ENCODE measurements at regions of chr2 and their contacts with region 1.

Region 1: DNA sequence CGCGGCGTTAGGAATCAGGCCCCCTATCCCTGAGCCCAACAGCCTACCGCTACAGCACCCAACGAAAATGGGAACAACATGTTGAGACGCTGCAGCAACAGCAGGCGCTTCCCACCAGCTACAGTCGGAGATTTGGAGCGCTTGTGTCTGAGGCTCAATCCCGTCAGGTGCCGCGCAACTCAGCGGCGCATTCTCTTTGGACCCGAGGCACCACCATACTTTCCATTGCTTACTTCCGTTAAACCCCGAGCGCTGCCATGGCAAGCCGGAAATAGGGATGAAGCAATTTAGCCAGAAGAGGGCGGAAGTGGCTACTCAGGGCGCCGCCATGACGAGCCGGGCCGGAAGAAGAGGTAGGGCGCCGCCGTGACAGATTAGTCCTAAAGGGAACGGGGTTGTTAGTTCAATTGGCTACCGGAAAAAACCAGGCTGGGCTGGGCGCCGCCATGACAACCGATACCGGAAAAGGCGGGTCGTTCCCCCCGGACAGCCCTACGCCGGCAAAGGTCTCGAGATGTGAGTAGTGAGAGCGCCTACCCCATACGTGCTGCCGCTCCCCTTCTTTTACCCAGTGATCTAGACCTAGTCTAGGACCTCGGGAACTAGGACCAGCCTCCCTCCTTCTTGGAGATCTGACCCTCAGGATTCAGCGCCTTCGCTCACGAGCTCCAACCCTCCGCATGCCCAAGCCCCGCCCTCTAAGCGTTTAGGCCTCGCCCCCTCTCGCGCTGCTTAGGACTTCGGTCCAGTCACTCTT is at the start of gene CHCHD5:
- DNase-seq: peak; percentile 85 to 97 (median 92)
- ATAC-seq: peak; percentile 84
- H3K4me3 ChIP-seq: peak within 1 kb of the TSS; percentile 79 to 96
- H3K4me3 Mint-ChIP-seq: peak within 1 kb of the TSS; percentile 95
- H3K27ac ChIP-seq: peak within 1 kb of the TSS; percentile 75 to 95
- H3K27ac Mint-ChIP-seq: peak within 1 kb of the TSS; percentile 94
- H3K4me1 ChIP-seq: peaks cover 24% of the 10 kb centered on the region
- H3K4me1 Mint-ChIP-seq: peaks cover 35% of the 10 kb centered on the region
- H3K27me3 ChIP-seq: no peaks in the 10 kb centered on the region
- H3K27me3 Mint-ChIP-seq: no peaks in the 10 kb centered on the region
- CTCF ChIP-seq: no peak
- total RNA-seq, gene CHCHD5: 12.0 to 15.5 TPM

Region 2: DNA sequence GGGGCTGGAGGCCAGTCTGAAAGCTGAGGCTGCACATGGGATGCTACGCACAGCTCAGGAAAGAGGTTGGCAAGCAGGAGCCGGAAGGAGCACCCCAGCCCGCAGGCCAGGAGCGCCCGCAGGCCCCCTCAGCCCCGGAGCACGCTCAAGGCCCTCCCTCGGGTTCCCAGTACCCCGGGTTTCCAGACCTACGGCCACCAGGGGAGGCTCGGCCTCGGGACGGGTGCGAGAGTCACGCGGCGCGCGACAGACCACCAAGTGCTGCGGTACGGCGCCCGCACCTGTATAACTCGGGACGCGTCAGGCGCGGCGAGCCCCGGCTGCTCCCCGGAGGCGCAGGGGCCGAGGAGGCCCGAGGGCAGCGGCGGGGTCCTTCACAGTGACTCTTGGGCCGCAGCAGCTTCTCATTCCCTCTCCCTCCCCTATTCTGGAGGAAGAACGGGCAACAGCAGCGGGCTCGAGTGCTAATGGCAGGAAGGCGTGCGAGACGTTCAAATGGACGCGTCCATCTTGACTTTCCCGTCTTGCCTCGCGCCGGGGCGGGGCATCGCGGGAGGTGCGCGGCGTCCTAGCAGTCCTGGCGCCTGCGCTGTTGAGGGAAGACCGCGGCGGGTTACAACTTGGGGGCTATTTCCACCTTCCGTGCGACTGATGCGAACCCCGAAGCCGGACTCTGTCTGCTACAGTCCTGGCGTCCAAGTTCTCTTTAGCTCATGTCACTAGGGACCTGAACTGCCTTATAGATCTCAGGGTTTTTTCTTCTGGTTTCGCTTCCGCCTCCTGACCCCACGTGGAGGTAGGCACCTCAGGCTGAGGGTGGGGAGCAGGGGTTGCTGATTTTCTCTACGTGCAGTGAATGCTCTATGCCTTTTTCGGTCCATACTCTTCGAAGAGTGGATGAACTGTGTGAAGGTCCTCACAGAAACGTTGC is 700.4 kb before region 1 on chr2 and contains the start of gene ANAPC1:
- CTCF ChIA-PET with region 1: no interaction called
- POLR2A ChIA-PET with region 1: no interaction called
- intact Hi-C with region 1: loop called in 1 of 2 experiments (anchors 10 kb)
- DNase-seq: peak; percentile 69 to 91 (median 86)
- ATAC-seq: peak; percentile 96
- H3K4me3 ChIP-seq: peak within 1 kb of the TSS; percentile 75 to 82
- H3K4me3 Mint-ChIP-seq: peak within 1 kb of the TSS; percentile 96
- H3K27ac ChIP-seq: peak within 1 kb of the TSS; percentile 76 to 81
- H3K27ac Mint-ChIP-seq: peak within 1 kb of the TSS; percentile 98
- H3K4me1 ChIP-seq: peaks cover 8% of the 10 kb centered on the region
- H3K4me1 Mint-ChIP-seq: peaks cover 14% of the 10 kb centered on the region
- H3K27me3 ChIP-seq: no peaks in the 10 kb centered on the region
- H3K27me3 Mint-ChIP-seq: no peaks in the 10 kb centered on the region
- CTCF ChIP-seq: no peak
- total RNA-seq, gene ANAPC1: 39.6 to 43.9 TPM

Region 3: GRCh38 chr2:112275306-112275886 is 308.9 kb before region 1 on chr2 and contains the start of gene ZC3H6:
- CTCF ChIA-PET with region 1: no interaction called
- POLR2A ChIA-PET with region 1: interaction called, 4 read pairs
- intact Hi-C with region 1: loop called (anchors 1 to 5 kb)
- DNase-seq: peak; percentile 98 to 100 (median 100)
- ATAC-seq: peak; percentile 90
- H3K4me3 ChIP-seq: peak within 1 kb of the TSS; percentile 74 to 100
- H3K4me3 Mint-ChIP-seq: peak within 1 kb of the TSS; percentile 95
- H3K27ac ChIP-seq: peak within 1 kb of the TSS; percentile 96 to 100
- H3K27ac Mint-ChIP-seq: peak within 1 kb of the TSS; percentile 100
- H3K4me1 ChIP-seq: peaks cover 19% of the 10 kb centered on the region
- H3K4me1 Mint-ChIP-seq: peaks cover 26% of the 10 kb centered on the region
- H3K27me3 ChIP-seq: no peaks in the 10 kb centered on the region
- H3K27me3 Mint-ChIP-seq: no peaks in the 10 kb centered on the region
- CTCF ChIP-seq: peak; percentile 16
- total RNA-seq, gene ZC3H6: 13.7 to 15.1 TPM

Region 4: DNA sequence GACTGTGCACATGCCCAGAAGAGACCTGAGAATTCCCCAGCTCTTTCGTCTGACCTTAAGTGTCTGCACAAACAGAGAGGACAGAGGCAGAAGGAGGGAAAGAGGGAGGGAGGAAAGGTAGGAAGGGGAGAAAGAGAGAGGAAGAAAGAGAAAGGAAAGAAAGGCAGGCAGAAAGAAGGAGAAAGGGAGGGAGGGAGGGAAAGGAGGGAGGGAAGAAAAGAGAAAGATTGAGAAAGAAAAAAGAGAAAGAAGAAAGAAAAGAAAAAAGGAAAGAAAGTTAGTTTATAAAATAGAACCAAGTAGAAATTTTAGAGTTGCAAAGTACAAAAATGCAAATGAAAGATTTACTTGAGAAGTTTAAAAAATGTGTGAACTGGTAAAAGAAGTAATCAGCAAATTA is 49.5 kb before region 1 on chr2:
- CTCF ChIA-PET with region 1: no interaction called
- POLR2A ChIA-PET with region 1: no interaction called
- intact Hi-C with region 1: no loop called
- DNase-seq: no peak
- ATAC-seq: no peak
- H3K4me3 ChIP-seq: no peak overlapping the region
- H3K4me3 Mint-ChIP-seq: no peak overlapping the region
- H3K27ac ChIP-seq: no peak overlapping the region
- H3K27ac Mint-ChIP-seq: no peak overlapping the region
- H3K4me1 ChIP-seq: no peaks in the 10 kb centered on the region
- H3K4me1 Mint-ChIP-seq: no peaks in the 10 kb centered on the region
- H3K27me3 ChIP-seq: no peaks in the 10 kb centered on the region
- H3K27me3 Mint-ChIP-seq: no peaks in the 10 kb centered on the region
- CTCF ChIP-seq: no peak

Region 5: GRCh38 chr2:112606488-112606902 is 22.2 kb after region 1 on chr2:
- CTCF ChIA-PET with region 1: interaction called, 18 read pairs
- POLR2A ChIA-PET with region 1: no interaction called
- intact Hi-C with region 1: no loop called
- DNase-seq: no peak
- ATAC-seq: no peak
- H3K4me3 ChIP-seq: no peak overlapping the region
- H3K4me3 Mint-ChIP-seq: no peak overlapping the region
- H3K27ac ChIP-seq: no peak overlapping the region
- H3K27ac Mint-ChIP-seq: no peak overlapping the region
- H3K4me1 ChIP-seq: no peaks in the 10 kb centered on the region
- H3K4me1 Mint-ChIP-seq: no peaks in the 10 kb centered on the region
- H3K27me3 ChIP-seq: no peaks in the 10 kb centered on the region
- H3K27me3 Mint-ChIP-seq: no peaks in the 10 kb centered on the region
- CTCF ChIP-seq: no peak

Region 6: GRCh38 chr2:112645310-112646101 is 61.2 kb after region 1 on chr2 and contains the start of gene SLC20A1:
- CTCF ChIA-PET with region 1: no interaction called
- POLR2A ChIA-PET with region 1: interaction called, 16 read pairs
- intact Hi-C with region 1: loop called (anchors 1 to 2 kb)
- DNase-seq: peak; percentile 96 to 100 (median 98)
- ATAC-seq: peak; percentile 91
- H3K4me3 ChIP-seq: peak within 1 kb of the TSS; percentile 84 to 90
- H3K4me3 Mint-ChIP-seq: peak within 1 kb of the TSS; percentile 85
- H3K27ac ChIP-seq: peak within 1 kb of the TSS; percentile 91
- H3K27ac Mint-ChIP-seq: peak within 1 kb of the TSS; percentile 89
- H3K4me1 ChIP-seq: peaks cover 50% of the 10 kb centered on the region
- H3K4me1 Mint-ChIP-seq: peaks cover 56% of the 10 kb centered on the region
- H3K27me3 ChIP-seq: no peaks in the 10 kb centered on the region
- H3K27me3 Mint-ChIP-seq: no peaks in the 10 kb centered on the region
- CTCF ChIP-seq: peak; percentile 55
- total RNA-seq, gene SLC20A1: 144 to 145 TPM

Measured in CD8-positive, alpha-beta T cell (primary cell).